ENCODE measurements at regions of chr1 and their contacts with region 1.

Region 1: DNA sequence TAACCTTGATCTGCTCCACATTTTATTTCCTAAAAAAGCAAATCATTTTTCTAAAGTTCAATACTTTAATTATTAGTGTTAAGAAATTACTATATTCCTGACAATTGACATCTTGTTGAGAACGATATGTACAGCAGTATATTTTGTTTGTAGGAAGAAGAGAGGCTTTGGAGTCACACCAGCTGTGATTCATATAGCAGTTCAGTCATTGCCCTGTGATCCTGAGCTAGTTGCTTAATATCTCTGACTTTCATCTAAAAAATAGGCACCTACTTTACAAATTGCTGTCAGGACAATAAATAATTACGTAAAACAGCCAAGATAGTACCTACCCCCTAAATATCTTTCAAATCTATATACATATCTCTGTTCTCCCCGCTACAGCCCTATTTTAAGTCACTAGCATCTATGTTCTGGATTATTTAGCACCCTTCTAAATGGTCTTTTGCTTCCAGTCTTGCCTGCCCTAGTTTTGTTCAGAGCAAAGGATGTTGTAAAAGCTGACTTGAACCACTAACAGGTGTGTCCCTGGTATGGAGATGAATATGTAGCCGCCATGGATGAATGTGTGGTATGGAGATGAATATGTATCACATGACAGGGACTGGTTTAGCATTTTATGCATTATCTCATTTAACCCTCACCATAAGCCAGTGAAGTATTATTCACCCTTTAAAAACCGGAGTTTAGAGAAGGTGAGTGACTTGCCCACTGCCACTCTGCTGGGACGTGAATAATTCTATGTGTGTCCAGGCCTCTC is 42.2 kb downstream of the RNF220 start:
- DNase-seq: no peak
- ATAC-seq: no peak
- H3K4me3 Mint-ChIP-seq: no peak overlapping the region
- H3K27ac Mint-ChIP-seq: no peak overlapping the region
- H3K4me1 Mint-ChIP-seq: peaks cover 9% of the 10 kb centered on the region
- H3K27me3 Mint-ChIP-seq: no peaks in the 10 kb centered on the region
- CTCF ChIP-seq: no peak

Region 2: DNA sequence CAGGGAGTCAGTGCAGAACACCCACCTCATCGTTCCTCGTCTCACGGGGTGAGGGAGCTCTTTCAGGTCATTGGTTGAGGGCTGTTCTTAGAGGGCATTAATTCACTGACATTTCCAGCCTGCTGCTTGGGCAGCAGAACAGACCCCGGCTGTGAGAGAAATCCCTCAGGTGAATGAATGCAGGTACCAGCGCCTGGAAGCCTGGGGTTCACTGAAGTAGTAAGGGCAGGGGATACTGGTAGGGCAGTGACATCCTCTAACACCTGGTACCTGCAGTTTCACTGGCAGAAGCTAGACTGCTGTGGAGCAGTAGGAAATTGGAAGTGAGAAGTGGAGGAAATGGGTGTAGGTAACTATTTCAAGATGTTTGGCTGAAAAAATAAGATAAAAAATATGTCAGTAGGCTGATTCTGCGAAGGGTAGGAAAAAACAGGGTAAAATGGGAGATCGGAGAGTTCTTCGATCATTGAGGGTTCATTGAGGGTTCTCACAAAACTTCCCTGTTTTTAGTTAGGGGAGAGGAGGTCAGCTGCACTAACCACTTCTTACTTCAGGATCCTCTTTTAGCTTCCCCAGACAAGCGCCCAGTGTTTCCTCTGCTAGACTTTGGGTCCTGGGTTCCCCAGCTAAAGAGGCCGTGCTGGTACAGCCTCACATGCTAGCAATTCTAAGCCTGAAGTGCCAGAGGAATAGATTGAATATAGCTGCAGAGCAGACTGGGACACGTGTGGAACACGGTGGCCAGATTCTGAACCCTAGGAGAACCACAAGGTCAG is 13.1 kb after region 1 on chr1:
- CTCF ChIA-PET with region 1: no interaction called
- POLR2A ChIA-PET with region 1: interaction called, 11 read pairs
- DNase-seq: no peak
- ATAC-seq: no peak
- H3K4me3 Mint-ChIP-seq: no peak overlapping the region
- H3K27ac Mint-ChIP-seq: no peak overlapping the region
- H3K4me1 Mint-ChIP-seq: peaks cover 12% of the 10 kb centered on the region
- H3K27me3 Mint-ChIP-seq: no peaks in the 10 kb centered on the region
- CTCF ChIP-seq: no peak

Region 3: DNA sequence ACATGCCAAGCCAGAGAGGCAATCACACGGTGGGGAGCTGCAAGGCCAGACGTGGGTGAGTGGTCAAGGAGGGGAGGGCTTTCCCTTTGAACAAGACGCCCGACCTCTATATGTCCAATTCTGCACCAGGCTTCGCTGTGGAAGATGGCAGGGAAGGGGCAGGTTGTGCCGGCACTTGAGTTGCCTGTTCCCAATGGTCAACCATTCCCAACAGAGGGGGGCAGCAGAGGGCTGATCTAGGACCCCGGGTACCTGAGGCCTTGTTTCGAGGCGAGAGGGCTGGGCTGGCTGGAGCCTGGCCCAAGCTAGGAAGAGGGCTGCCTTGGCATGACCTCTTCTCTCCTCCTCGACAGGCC is 162.2 kb after region 1 on chr1:
- CTCF ChIA-PET with region 1: no interaction called
- POLR2A ChIA-PET with region 1: no interaction called
- DNase-seq: peak; percentile 88
- ATAC-seq: peak; percentile 88
- H3K4me3 Mint-ChIP-seq: no peak overlapping the region
- H3K27ac Mint-ChIP-seq: no peak overlapping the region
- H3K4me1 Mint-ChIP-seq: peaks cover 11% of the 10 kb centered on the region
- H3K27me3 Mint-ChIP-seq: no peaks in the 10 kb centered on the region
- CTCF ChIP-seq: peak; percentile 29; the same call in 1 of the 2 replicates

Measured in WTC11 (cell line).